A549 (cell line): ENCODE measurements at regions of chr1 and their contacts with region 1.

Region 1: GRCh38 chr1:200971955-200972711 is 51.4 kb downstream of the KIF21B start:
- DNase-seq: peak; percentile 37 to 76
- ATAC-seq: peak in 1 of 2 experiments; percentile 47; a peak in 3 of 6 replicates
- H3K4me3 ChIP-seq: no peak overlapping the region
- H3K27ac ChIP-seq: peak overlapping the region; percentile 63 to 76
- H3K4me1 ChIP-seq: peaks cover 31% of the 10 kb centered on the region
- CTCF ChIP-seq: peak; percentile 89
- EP300 ChIP-seq: no peak
- POLR2A ChIP-seq: no peak
- RAD21 ChIP-seq: peak; percentile 77 to 90

Region 2: DNA sequence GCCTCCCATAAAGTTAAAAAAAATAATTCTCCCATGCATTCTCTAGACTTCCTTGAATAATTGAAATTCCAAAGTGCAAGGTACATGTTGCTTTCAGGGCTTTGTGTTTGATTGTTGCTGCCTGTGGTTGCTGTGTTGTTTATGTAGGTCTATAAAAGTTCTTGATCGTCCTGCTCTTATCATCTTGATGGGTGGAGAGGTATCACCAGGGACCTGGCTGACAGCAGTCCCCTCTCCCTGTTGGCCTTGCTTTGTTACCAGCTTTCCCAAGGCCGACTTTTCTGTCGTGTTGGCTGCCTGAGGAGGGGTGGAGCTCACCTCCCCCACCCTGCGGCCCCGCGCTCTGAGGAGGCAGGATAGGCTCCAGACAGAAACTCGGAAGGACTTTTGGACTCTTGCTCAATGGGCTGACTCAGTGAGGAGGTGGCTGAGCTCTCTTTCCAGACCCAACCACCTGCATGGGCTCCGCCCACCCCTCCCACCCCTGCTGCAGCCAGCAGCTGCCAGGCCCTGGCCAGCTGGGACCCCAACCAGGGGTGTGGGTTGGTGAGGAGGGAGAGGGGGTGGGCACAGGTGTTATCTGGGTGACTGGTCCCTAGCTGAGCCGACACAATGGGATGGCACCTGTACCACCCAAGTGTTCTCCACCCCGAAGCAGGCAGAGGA is 75.5 kb before region 1 on chr1:
- CTCF ChIA-PET with region 1: interaction called, 57 read pairs
- POLR2A ChIA-PET with region 1: interaction called, 6 read pairs
- DNase-seq: peak; percentile 93 to 98
- ATAC-seq: peak; percentile 73 to 78
- H3K4me3 ChIP-seq: peak overlapping the region; percentile 68
- H3K27ac ChIP-seq: peak overlapping the region; percentile 100
- H3K4me1 ChIP-seq: peaks cover 77% of the 10 kb centered on the region
- CTCF ChIP-seq: no peak
- EP300 ChIP-seq: peak; percentile 86 to 91; a peak in 3 of 5 replicates
- POLR2A ChIP-seq: peak; percentile 41; the same call in 1 of the 2 replicates
- RAD21 ChIP-seq: peak in 1 of 2 experiments; percentile 41; a peak in 1 of 5 replicates

Region 3: DNA sequence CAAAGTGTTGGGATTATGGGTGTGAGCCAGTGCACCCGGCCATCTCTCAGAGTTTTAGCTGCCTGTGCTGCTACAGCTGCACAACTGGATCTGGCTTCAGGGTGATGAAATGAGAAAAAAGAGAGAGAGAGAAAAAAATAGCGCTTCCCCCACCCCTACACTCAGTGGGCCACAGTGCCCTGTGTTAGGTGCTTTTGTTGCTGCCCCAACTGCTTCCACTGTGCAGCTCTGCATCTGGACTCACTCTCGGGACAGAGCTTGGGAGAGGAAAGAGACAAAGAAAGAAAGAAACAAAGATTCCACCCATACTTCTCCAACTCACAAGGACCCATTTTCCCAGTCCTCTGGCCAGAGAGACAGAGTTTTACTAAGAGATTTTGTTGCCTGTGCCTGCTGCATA is 27.0 kb before region 1 on chr1:
- CTCF ChIA-PET with region 1: interaction called, 23 read pairs
- POLR2A ChIA-PET with region 1: no interaction called
- DNase-seq: no peak
- ATAC-seq: no peak
- H3K4me3 ChIP-seq: no peak overlapping the region
- H3K27ac ChIP-seq: no peak overlapping the region
- H3K4me1 ChIP-seq: no peaks in the 10 kb centered on the region
- CTCF ChIP-seq: no peak
- EP300 ChIP-seq: no peak
- POLR2A ChIP-seq: no peak
- RAD21 ChIP-seq: no peak

Region 4: GRCh38 chr1:200992382-200993048 is 20.4 kb after region 1 on chr1:
- CTCF ChIA-PET with region 1: interaction called, 38 read pairs
- POLR2A ChIA-PET with region 1: no interaction called
- DNase-seq: no peak
- ATAC-seq: no peak
- H3K4me3 ChIP-seq: no peak overlapping the region
- H3K27ac ChIP-seq: no peak overlapping the region
- H3K4me1 ChIP-seq: no peaks in the 10 kb centered on the region
- CTCF ChIP-seq: no peak
- EP300 ChIP-seq: no peak
- POLR2A ChIP-seq: no peak
- RAD21 ChIP-seq: no peak

Region 5: GRCh38 chr1:201023517-201023902 is 51.4 kb after region 1 on chr1 and contains the start of gene KIF21B:
- CTCF ChIA-PET with region 1: interaction called, 48 read pairs
- POLR2A ChIA-PET with region 1: no interaction called
- DNase-seq: peak; percentile 59 to 88
- ATAC-seq: peak; percentile 66 to 85
- H3K4me3 ChIP-seq: peak within 1 kb of the TSS; percentile 76
- H3K27ac ChIP-seq: peak within 1 kb of the TSS; percentile 64 to 96
- H3K4me1 ChIP-seq: peaks cover 64% of the 10 kb centered on the region
- CTCF ChIP-seq: no peak
- EP300 ChIP-seq: no peak
- POLR2A ChIP-seq: no peak
- RAD21 ChIP-seq: no peak
- polyA plus RNA-seq, gene KIF21B: 3.6 and 3.8 TPM in 2 replicates

Region 6: GRCh38 chr1:201114236-201115131 is 142.4 kb after region 1 on chr1:
- CTCF ChIA-PET with region 1: interaction called, 30 read pairs
- POLR2A ChIA-PET with region 1: interaction called, 9 read pairs
- DNase-seq: peak; percentile 93 to 98
- ATAC-seq: peak; percentile 93 to 97
- H3K4me3 ChIP-seq: peak overlapping the region; percentile 80
- H3K27ac ChIP-seq: peak overlapping the region; percentile 87 to 89
- H3K4me1 ChIP-seq: peaks cover 8% of the 10 kb centered on the region
- CTCF ChIP-seq: peak; percentile 84
- EP300 ChIP-seq: no peak
- POLR2A ChIP-seq: peak; percentile 78
- RAD21 ChIP-seq: peak; percentile 90 to 91

Region 7: GRCh38 chr1:201137579-201138310 is 165.6 kb after region 1 on chr1:
- CTCF ChIA-PET with region 1: no interaction called
- POLR2A ChIA-PET with region 1: no interaction called
- DNase-seq: no peak
- ATAC-seq: peak; percentile 39 to 46; a peak in 5 of 6 replicates
- H3K4me3 ChIP-seq: no peak overlapping the region
- H3K27ac ChIP-seq: peak overlapping the region in 1 of 2 experiments; percentile 16; a peak in 1 of 6 replicates
- H3K4me1 ChIP-seq: peaks cover 13% of the 10 kb centered on the region; the same call in 1 of the 3 replicates
- CTCF ChIP-seq: no peak
- EP300 ChIP-seq: no peak
- POLR2A ChIP-seq: no peak
- RAD21 ChIP-seq: no peak